RWPE1 (cell line): ENCODE measurements at regions of chr19 and their contacts with region 1.

Region 1: GRCh38 chr19:18500799-18501198 is 21.1 kb downstream of the ELL start:
- DNase-seq: no peak
- H3K27ac ChIP-seq: peak overlapping the region; percentile 60
- CTCF ChIP-seq: no peak

Region 2: GRCh38 chr19:18401580-18402112 is 99.2 kb before region 1 on chr19:
- CTCF ChIA-PET with region 1: no interaction called
- POLR2A ChIA-PET with region 1: no interaction called
- DNase-seq: no peak
- H3K27ac ChIP-seq: peak overlapping the region; percentile 54
- CTCF ChIP-seq: peak; percentile 42; the same call in 1 of the 2 replicates

Region 3: GRCh38 chr19:18521885-18522624 is 21.3 kb after region 1 on chr19 and contains the start of gene ELL:
- CTCF ChIA-PET with region 1: interaction called, 10 read pairs
- POLR2A ChIA-PET with region 1: no interaction called
- DNase-seq: peak; percentile 99
- H3K27ac ChIP-seq: peak within 1 kb of the TSS; percentile 97
- CTCF ChIP-seq: no peak